Heart left ventricle (tissue), 16 donors: ENCODE measurements at regions of chr1 and their contacts with region 1.

Region 1: DNA sequence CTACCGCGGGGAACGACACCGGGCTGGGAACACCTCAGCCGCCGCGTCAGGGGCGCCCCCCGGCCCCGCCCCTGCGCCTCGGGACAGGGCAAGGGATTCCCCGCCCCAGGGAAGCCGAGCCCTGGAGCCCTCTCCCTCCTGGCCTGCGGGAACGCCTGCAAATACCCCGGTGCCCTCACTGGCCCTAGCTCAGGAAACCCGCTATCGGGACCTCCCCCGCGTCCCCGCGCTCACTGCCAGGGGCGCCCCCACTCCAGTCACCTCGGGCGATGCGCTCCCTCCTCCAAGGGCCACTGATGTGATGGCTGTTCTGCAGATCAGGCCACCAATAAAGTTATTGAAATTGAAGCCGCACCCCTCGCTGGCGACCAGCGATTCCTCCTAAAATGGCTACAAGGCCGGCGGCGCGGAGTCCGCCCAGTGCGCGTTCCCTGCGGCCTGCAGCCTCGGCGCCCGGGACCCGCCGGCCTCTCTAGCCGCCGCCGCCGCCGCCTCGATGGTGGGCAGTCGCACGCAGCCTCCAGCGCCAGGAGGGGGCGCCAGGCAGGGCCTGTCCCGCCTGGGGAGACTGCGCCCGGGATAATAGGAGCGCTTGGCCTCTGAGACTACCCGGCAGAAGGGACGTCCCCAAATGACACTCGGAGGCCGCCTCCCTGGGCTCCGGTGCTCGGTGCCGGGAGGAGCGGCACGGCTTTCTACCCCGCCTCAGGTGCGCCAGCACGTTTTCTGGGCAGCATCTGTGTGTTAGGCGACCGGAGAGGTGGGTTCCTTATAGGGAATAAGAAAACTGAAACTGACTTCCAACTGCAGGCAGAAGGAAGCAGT is at the start of gene PRKAB2:
- DNase-seq: peak; percentile 96 to 98 (median 97)
- ATAC-seq: peak; percentile 91 to 98 (median 96)
- H3K4me3 ChIP-seq: peak within 1 kb of the TSS; percentile 69 to 96 (median 88)
- H3K27ac ChIP-seq: peak within 1 kb of the TSS; percentile 81 to 99 (median 94)
- H3K4me1 ChIP-seq: peaks cover 0 to 56% (median 35%) of the 10 kb centered on the region in 12 donors
- H3K27me3 ChIP-seq: no peaks in the 10 kb centered on the region
- CTCF ChIP-seq: peak; percentile 90 to 99 (median 96)
- POLR2A ChIP-seq: peak; percentile 6 to 50
- total RNA-seq, gene PRKAB2: 15.0 to 43.2 (median 28.9) TPM

Region 2: GRCh38 chr1:147225193-147225730 is 52.9 kb after region 1 on chr1 and contains the start of gene FMO5:
- intact Hi-C with region 1: loop called in 3 of 10 experiments (anchors 5 kb)
- DNase-seq: peak; percentile 62 to 80 (median 70)
- ATAC-seq: peak; percentile 68 to 92 (median 91)
- H3K4me3 ChIP-seq: peak within 1 kb of the TSS; percentile 47 to 88 (median 68)
- H3K27ac ChIP-seq: peak within 1 kb of the TSS; percentile 44 to 88 (median 66)
- H3K4me1 ChIP-seq: peaks cover 0 to 12% (median 4%) of the 10 kb centered on the region in 12 donors
- H3K27me3 ChIP-seq: no peaks in the 10 kb centered on the region
- CTCF ChIP-seq: peak in 3 of 12 donors; percentile 10 to 36 (median 18)
- POLR2A ChIP-seq: peak in 1 of 2 donors; percentile 40
- total RNA-seq, gene FMO5: 0.74 to 17.0 (median 1.2) TPM

Region 3: GRCh38 chr1:147242439-147243227 is 70.3 kb after region 1 on chr1 and contains the start of gene CHD1L:
- intact Hi-C with region 1: loop called (anchors 1 to 2 kb)
- DNase-seq: peak; percentile 94 to 99 (median 97)
- ATAC-seq: peak; percentile 93 to 99 (median 97)
- H3K4me3 ChIP-seq: peak within 1 kb of the TSS; percentile 68 to 100 (median 92)
- H3K27ac ChIP-seq: peak within 1 kb of the TSS; percentile 71 to 98 (median 92)
- H3K4me1 ChIP-seq: peaks cover 3 to 43% (median 15%) of the 10 kb centered on the region in 12 donors
- H3K27me3 ChIP-seq: no peaks in the 10 kb centered on the region
- CTCF ChIP-seq: peak; percentile 70 to 94 (median 82)
- POLR2A ChIP-seq: peak in 1 of 2 donors; percentile 57
- total RNA-seq, gene CHD1L: 6.0 to 17.7 (median 8.2) TPM